ENCODE measurements at regions of chr1 and their contacts with region 1.

Region 1: DNA sequence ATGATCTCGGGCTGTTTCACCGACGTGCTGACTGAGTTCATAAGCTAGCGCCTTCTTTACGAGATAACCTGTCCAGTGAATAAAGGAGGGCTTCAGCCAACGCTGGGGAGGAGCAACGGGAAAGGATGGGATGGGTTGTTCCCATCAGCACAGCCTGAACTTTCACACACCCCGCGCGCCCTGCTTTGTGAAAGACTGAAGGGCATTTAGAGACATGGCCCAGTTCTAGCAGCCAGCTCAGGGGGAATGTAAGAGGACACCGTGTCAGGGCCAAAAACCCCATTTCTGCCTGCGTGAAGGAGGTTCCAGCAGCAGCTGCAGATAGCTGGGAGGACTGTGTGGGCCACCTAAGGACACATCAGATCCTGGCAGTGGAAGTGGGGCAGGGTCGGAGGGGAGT is 255.1 kb upstream of the RAB4A start:
- DNase-seq: no peak
- H3K4me3 ChIP-seq: no peak overlapping the region
- H3K27ac ChIP-seq: no peak overlapping the region
- H3K4me1 ChIP-seq: no peaks in the 10 kb centered on the region
- H3K27me3 ChIP-seq: no peaks in the 10 kb centered on the region
- CTCF ChIP-seq: no peak
- EP300 ChIP-seq: no peak
- POLR2A ChIP-seq: no peak

Region 2: DNA sequence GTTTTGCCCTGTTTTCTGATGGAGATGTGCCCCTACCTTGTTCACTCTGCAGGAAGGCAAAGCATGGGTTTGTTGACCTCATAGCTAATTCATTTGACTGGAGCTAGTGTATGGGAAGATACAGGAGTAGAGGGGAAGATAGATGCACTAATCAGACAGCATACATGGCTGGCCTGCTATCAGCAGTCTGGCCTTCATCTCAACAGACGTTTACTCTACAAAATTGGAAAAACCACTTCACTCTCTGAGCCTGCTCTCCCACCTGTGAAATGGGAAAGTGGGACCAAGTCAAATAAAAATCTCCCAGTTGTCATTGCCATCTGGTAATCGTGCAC is 19.9 kb after region 1 on chr1:
- intact Hi-C with region 1: loop called (anchors 2 kb)
- DNase-seq: no peak
- H3K4me3 ChIP-seq: no peak overlapping the region
- H3K27ac ChIP-seq: no peak overlapping the region
- H3K4me1 ChIP-seq: peaks cover 0 to 12% (median 4%) of the 10 kb centered on the region in 4 donors
- H3K27me3 ChIP-seq: no peaks in the 10 kb centered on the region
- CTCF ChIP-seq: no peak
- EP300 ChIP-seq: no peak
- POLR2A ChIP-seq: no peak